Activated CD4-positive, alpha-beta T cell treated with anti-CD3 and anti-CD28 coated beads, Interleukin-2, amount 10 ng/mL, durations not matched to agents 24 days and 14 days (primary cell): ENCODE measurements at regions of chr15 and their contacts with region 1.

Region 1: GRCh38 chr15:58546635-58547627 is 115.1 kb downstream of the LIPC start:
- DNase-seq: no peak
- H3K4me3 Mint-ChIP-seq: peak overlapping the region; percentile 25
- H3K27ac Mint-ChIP-seq: peak overlapping the region; percentile 97
- H3K4me1 Mint-ChIP-seq: peaks cover 60% of the 10 kb centered on the region
- H3K27me3 Mint-ChIP-seq: no peaks in the 10 kb centered on the region

Region 2: DNA sequence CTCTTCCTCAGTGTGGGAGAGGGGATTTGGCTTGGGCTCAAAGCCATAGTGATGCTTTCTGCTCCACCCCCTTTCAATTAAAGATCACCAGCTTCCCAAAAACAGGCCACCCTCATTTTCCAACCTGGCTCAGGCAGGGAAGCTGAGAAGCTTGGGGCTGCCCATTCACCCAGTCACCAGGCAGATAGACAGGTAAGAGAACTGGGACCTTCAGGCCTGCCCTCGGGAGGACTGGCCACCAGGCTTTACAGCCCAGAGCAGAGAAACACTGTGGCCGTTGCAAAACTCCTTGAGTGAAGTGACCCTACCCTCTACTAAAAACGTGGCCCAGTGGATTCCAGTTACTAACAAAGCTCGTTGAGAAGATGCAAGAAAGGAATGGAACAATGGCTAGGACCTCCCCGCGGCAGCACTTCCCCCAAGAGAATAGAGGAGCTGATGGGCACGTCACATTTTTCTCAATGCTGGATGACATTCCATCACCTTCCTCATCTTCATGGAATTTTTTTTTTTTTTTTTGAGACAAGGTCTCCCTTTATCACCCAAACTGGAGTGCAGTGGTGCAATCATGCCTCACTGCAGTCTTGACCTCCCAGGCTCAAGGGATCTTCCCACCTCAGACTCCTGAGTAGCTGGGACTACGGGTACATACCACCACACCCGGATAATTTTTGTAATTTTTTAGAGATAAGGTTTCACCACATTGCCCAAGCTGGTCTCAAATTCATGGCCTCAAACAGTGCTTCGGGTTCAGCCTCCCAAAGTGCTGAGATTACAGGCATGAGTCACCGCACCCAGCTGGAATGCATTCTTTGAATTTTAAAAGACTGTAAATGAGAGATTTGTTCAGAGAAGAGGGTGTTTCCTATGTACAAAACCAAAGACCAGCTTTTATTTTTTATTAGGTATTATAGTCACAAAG is 77.2 kb before region 1 on chr15:
- intact Hi-C with region 1: loop called (anchors 5 kb)
- DNase-seq: no peak
- H3K4me3 Mint-ChIP-seq: no peak overlapping the region
- H3K27ac Mint-ChIP-seq: no peak overlapping the region
- H3K4me1 Mint-ChIP-seq: peaks cover 46% of the 10 kb centered on the region
- H3K27me3 Mint-ChIP-seq: no peaks in the 10 kb centered on the region

Region 3: DNA sequence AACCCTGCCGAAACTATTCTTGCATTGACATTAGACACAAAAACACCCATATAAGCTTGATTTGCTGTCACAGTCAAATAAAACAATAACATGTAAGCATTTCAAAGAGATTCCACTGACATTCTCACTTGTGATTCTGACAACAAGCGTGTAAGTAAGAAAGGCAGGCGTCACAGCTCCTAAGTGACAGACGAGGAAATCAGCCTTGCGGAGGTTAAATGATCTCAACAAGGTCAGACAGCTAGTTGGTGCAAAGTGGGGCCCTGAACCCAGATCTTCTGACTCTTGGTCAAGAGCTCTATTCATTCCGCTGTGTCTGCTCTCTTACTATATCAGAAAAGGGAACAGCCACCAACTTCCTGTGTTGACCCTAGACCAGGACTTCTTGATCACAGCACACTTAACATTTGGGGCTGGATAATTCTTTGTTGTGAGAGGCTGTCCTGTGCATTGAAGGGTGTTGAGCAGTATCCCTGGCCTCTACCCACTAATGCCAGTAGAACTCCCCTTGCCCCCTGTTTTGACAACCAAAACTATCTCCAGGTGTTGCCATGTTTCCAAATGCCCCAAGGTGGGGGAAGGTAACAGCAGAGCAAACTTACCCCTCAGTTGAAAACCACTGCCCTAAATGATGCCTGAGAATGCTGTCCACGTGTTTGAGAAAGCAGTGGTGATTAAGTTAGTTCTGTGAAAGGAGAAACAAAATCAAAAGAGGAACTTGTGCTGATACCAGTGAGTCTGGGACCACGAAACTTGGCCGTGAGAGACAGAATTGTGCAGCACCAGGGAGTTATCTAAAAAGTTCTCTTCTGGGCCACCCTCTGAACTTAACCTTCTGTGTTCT is 29.0 kb before region 1 on chr15:
- intact Hi-C with region 1: loop called (anchors 1 kb)
- DNase-seq: peak; percentile 77
- H3K4me3 Mint-ChIP-seq: peak overlapping the region; percentile 37
- H3K27ac Mint-ChIP-seq: peak overlapping the region; percentile 86
- H3K4me1 Mint-ChIP-seq: peaks cover 70% of the 10 kb centered on the region
- H3K27me3 Mint-ChIP-seq: no peaks in the 10 kb centered on the region

Region 4: GRCh38 chr15:58785355-58785754 is 238.4 kb after region 1 on chr15:
- intact Hi-C with region 1: no loop called
- DNase-seq: no peak
- H3K4me3 Mint-ChIP-seq: no peak overlapping the region
- H3K27ac Mint-ChIP-seq: no peak overlapping the region
- H3K4me1 Mint-ChIP-seq: peaks cover 3% of the 10 kb centered on the region
- H3K27me3 Mint-ChIP-seq: no peaks in the 10 kb centered on the region